ENCODE measurements at regions of chr16 and their contacts with region 1.

Region 1: DNA sequence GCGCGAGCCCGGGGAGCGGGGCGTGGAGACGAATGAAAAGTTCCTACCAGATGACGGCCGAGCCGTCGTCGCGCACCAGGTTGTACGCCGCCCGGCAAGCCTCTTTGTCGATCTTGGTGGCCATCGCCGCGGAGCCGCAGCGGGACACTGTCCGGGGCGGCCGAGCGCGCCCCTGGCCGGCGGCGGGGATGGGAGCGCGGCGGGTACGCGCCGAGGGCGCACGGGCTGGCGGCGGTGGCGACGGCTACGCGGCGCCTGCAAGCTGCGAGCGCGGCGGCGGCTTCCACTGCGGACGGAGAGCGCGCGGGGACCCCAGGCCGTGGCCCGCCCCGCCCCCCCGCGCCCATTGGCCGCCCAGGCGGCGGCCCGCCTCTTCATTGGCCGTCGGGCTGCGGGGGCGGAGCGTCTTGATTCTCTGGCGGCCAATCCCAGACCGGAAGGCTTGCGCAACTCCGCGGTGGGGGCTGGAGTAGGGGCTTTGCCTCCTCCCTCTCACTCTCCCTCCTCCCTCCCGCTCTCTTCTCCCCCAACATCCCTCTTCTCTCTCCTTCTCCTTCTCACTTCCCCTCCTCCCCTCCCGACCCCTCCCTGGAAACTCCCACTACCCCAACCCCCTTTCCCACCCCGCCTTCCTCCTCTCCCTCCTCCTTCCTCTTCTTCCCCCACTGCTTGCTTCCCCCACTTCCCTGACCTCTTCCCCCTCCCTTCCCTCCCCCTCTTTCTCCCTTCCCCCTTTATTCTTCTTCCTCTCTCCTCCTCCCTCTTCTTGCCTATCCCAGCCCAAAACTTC is at the start of gene COTL1:
- DNase-seq: peak; percentile 85 to 97 (median 95)
- ATAC-seq: peak; percentile 86
- H3K4me3 ChIP-seq: peak within 1 kb of the TSS; percentile 80 to 82
- H3K4me3 Mint-ChIP-seq: peak within 1 kb of the TSS; percentile 95
- H3K27ac ChIP-seq: peak within 1 kb of the TSS; percentile 49 to 66
- H3K27ac Mint-ChIP-seq: peak within 1 kb of the TSS; percentile 90
- H3K4me1 ChIP-seq: peaks cover 43% of the 10 kb centered on the region
- H3K4me1 Mint-ChIP-seq: peaks cover 47% of the 10 kb centered on the region
- H3K27me3 ChIP-seq: peaks cover 0 to 4% of the 10 kb centered on the region in 2 experiments
- H3K27me3 Mint-ChIP-seq: no peaks in the 10 kb centered on the region
- CTCF ChIP-seq: no peak
- total RNA-seq, gene COTL1: 194 to 199 TPM

Region 2: DNA sequence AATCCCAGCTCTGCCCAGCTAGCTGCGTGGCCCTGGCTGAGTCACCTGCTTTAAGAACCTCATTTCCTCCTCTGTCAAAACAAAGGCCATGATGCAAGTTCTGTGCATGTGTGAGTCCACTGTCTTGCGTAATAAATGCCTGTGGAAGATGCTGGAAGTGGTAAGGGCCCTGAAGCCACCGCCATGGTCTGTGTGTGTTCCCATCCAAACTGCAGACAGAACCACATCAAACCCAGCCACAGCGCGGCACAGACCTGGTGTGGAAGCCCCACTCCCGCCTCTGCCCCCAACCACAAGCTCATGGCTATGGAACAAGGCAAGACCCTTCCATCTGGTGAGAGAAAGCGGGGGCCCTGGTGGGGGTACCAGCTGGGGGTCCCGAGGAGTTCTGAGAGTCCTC is 623.9 kb before region 1 on chr16:
- CTCF ChIA-PET with region 1: no interaction called
- POLR2A ChIA-PET with region 1: no interaction called
- intact Hi-C with region 1: no loop called
- DNase-seq: peak in 1 of 9 experiments; percentile 31
- ATAC-seq: no peak
- H3K4me3 ChIP-seq: no peak overlapping the region
- H3K4me3 Mint-ChIP-seq: no peak overlapping the region
- H3K27ac ChIP-seq: no peak overlapping the region
- H3K27ac Mint-ChIP-seq: no peak overlapping the region
- H3K4me1 ChIP-seq: no peaks in the 10 kb centered on the region
- H3K4me1 Mint-ChIP-seq: peaks cover 4% of the 10 kb centered on the region
- H3K27me3 ChIP-seq: peaks cover 0 to 2% of the 10 kb centered on the region in 2 experiments
- H3K27me3 Mint-ChIP-seq: peaks cover 57% of the 10 kb centered on the region
- CTCF ChIP-seq: no peak

Region 3: DNA sequence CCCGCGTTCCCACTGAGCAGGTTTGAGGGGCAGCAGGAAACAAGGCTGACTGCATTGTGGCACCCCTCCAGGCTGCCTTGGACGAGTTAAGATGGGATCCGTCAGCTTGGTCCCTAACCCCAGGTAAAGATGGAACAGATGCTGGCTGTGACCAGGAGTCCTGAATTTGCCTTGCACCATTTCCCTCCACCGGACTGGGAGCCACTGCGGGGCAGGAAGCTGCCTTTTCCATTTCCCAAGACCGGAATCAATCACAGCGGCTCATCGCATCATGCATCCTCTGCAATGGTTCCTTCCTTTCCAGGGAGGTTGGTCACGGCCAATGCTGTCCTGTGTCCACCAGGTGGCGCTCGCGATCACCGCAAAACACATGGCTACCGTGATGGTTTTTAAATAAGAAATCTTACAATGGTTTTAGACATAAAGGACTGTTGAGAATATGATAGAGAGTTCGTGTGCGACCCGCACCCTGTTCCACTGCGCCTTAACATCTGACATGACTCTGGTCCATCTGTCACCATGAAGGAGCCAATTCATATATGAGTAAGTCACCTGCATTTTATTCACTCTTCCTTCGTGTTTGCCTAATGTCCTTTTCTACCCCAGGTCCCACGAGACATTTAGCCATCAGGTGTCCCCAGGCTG is 106.7 kb before region 1 on chr16:
- CTCF ChIA-PET with region 1: interaction called, 392 read pairs
- POLR2A ChIA-PET with region 1: interaction called, 17 read pairs
- intact Hi-C with region 1: loop called (anchors 1 kb)
- DNase-seq: peak; percentile 75 to 93 (median 84)
- ATAC-seq: peak; percentile 16
- H3K4me3 ChIP-seq: no peak overlapping the region
- H3K4me3 Mint-ChIP-seq: no peak overlapping the region
- H3K27ac ChIP-seq: no peak overlapping the region
- H3K27ac Mint-ChIP-seq: peak overlapping the region; percentile 60
- H3K4me1 ChIP-seq: peaks cover 85% of the 10 kb centered on the region
- H3K4me1 Mint-ChIP-seq: peaks cover 73% of the 10 kb centered on the region
- H3K27me3 ChIP-seq: peaks cover 0 to 2% of the 10 kb centered on the region in 2 experiments
- H3K27me3 Mint-ChIP-seq: no peaks in the 10 kb centered on the region
- CTCF ChIP-seq: peak; percentile 95

Region 4: DNA sequence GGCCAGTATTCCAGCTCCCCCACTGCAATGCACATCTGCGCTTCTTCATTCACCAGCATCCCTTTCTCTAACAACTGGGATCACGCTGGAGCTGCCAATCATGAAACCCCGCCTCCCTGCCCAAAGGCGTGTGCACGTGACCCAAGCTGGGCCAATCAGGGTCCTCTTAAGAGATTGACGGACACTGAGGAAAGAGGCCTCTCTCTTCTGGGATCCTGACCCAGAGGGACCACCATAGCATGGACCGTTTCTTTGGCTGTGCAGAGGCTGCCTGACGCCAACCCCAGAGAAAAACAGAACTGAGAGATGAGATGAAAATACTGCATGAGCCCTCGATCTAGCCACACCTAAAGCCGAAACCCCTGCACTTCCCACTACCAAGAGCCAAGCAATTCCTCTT is 32.1 kb before region 1 on chr16:
- CTCF ChIA-PET with region 1: interaction called, 10 read pairs
- POLR2A ChIA-PET with region 1: no interaction called
- intact Hi-C with region 1: no loop called
- DNase-seq: no peak
- ATAC-seq: no peak
- H3K4me3 ChIP-seq: no peak overlapping the region
- H3K4me3 Mint-ChIP-seq: no peak overlapping the region
- H3K27ac ChIP-seq: no peak overlapping the region
- H3K27ac Mint-ChIP-seq: peak overlapping the region; percentile 80
- H3K4me1 ChIP-seq: peaks cover 12% of the 10 kb centered on the region
- H3K4me1 Mint-ChIP-seq: peaks cover 40% of the 10 kb centered on the region
- H3K27me3 ChIP-seq: no peaks in the 10 kb centered on the region
- H3K27me3 Mint-ChIP-seq: no peaks in the 10 kb centered on the region
- CTCF ChIP-seq: no peak

Region 5: DNA sequence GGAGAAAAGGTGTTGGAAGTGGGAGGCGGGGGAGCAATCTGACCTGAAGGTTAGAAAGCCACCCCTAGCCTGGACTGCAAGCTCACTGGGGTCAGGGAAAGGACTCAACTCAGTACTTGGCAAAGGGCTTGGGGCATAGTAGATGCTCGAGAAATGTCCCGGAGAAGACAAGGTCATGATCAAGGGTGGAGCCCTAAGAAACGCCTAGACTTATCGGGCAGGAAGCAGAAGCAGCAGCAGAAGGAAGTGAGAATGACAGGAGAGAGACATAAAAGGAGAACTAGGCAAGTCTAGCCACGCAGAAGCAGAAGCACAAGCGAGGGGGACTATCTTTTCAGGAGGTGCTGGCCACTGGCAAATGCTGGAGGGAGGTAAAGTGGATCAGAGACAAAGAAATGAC is 10.3 kb before region 1 on chr16:
- CTCF ChIA-PET with region 1: interaction called, 23 read pairs
- POLR2A ChIA-PET with region 1: interaction called, 10 read pairs
- intact Hi-C with region 1: loop called in 1 of 2 experiments (anchors 1 kb)
- DNase-seq: peak in 4 of 9 experiments; percentile 30 to 72 (median 48)
- ATAC-seq: peak; percentile 34
- H3K4me3 ChIP-seq: peak overlapping the region; percentile 3 to 15
- H3K4me3 Mint-ChIP-seq: peak overlapping the region; percentile 55
- H3K27ac ChIP-seq: peak overlapping the region; percentile 16 to 62
- H3K27ac Mint-ChIP-seq: peak overlapping the region; percentile 85
- H3K4me1 ChIP-seq: peaks cover 93% of the 10 kb centered on the region
- H3K4me1 Mint-ChIP-seq: peaks cover 93% of the 10 kb centered on the region
- H3K27me3 ChIP-seq: no peaks in the 10 kb centered on the region
- H3K27me3 Mint-ChIP-seq: no peaks in the 10 kb centered on the region
- CTCF ChIP-seq: no peak

Region 6: DNA sequence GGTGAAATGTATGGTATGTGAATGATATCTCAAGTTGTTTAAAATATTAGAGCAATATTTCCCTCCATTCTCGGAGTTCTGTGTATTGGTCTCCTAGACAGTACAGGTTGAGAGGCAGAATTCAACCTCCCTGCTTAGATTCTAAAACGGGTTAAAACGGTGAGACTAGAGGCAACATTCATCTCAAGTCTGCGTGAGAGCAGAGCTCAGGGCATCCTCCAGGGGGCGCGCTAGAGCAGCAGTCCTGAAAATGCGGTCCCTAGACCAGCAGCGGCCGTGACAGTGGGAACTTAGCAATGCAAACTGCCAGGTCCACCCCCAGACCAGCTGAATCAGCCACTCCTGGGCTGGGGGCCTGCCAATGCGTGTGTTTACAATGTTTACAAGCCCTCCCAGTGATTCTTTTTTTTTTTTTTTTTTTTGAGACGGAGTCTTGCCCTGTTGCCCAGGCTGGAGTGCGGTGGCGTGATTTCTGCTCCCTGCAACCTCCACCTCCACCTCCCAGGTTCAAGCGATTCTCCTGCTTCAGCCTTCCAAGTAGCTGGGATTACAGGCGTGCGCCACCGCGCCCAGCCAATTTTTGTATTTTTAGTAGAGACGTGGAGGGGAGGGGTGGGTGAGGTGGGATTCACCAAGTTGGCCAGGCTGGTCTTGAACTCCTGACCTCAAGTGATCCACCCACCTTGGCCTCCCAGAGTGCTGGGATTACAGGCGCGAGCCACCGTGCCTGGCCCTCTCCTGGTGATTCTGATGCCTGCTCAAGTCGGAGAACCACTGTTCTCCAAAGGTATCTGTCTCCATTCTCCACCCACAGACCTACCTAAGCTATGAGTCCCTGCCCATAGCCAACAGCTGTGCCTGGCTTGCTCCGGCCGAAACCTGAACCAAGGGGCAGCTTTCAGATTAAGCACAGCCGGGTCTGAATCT is 54.6 kb after region 1 on chr16:
- CTCF ChIA-PET with region 1: interaction called, 12 read pairs
- POLR2A ChIA-PET with region 1: no interaction called
- intact Hi-C with region 1: loop called in 1 of 2 experiments (anchors 2 kb)
- DNase-seq: peak; percentile 64 to 91 (median 80)
- ATAC-seq: peak; percentile 97
- H3K4me3 ChIP-seq: no peak overlapping the region
- H3K4me3 Mint-ChIP-seq: no peak overlapping the region
- H3K27ac ChIP-seq: no peak overlapping the region
- H3K27ac Mint-ChIP-seq: no peak overlapping the region
- H3K4me1 ChIP-seq: no peaks in the 10 kb centered on the region
- H3K4me1 Mint-ChIP-seq: peaks cover 6% of the 10 kb centered on the region
- H3K27me3 ChIP-seq: no peaks in the 10 kb centered on the region
- H3K27me3 Mint-ChIP-seq: no peaks in the 10 kb centered on the region
- CTCF ChIP-seq: peak; percentile 83

Region 7: GRCh38 chr16:84738255-84739038 is 120.5 kb after region 1 on chr16:
- CTCF ChIA-PET with region 1: interaction called, 327 read pairs
- POLR2A ChIA-PET with region 1: interaction called, 3 read pairs
- intact Hi-C with region 1: loop called (anchors 1 kb)
- DNase-seq: peak; percentile 44 to 87 (median 78)
- ATAC-seq: peak; percentile 82
- H3K4me3 ChIP-seq: peak overlapping the region in 1 of 2 experiments; percentile 18
- H3K4me3 Mint-ChIP-seq: peak overlapping the region; percentile 53
- H3K27ac ChIP-seq: no peak overlapping the region
- H3K27ac Mint-ChIP-seq: peak overlapping the region; percentile 64
- H3K4me1 ChIP-seq: peaks cover 23% of the 10 kb centered on the region
- H3K4me1 Mint-ChIP-seq: peaks cover 48% of the 10 kb centered on the region
- H3K27me3 ChIP-seq: no peaks in the 10 kb centered on the region
- H3K27me3 Mint-ChIP-seq: no peaks in the 10 kb centered on the region
- CTCF ChIP-seq: peak; percentile 84

Measured in CD8-positive, alpha-beta T cell (primary cell).